Heart left ventricle (tissue), 16 donors: ENCODE measurements at regions of chr2 and their contacts with region 1.

Region 1: GRCh38 chr2:196592912-196593881 is 46.3 kb upstream of the CCDC150 start:
- DNase-seq: peak; percentile 32 to 76 (median 56)
- ATAC-seq: peak; percentile 78 to 82 (median 80)
- H3K4me3 ChIP-seq: peak within 1 kb of the TSS; percentile 50 to 83 (median 70)
- H3K27ac ChIP-seq: peak within 1 kb of the TSS; percentile 62 to 93 (median 80)
- H3K4me1 ChIP-seq: peaks cover 0 to 14% (median 0%) of the 10 kb centered on the region in 12 donors
- H3K27me3 ChIP-seq: peaks cover 0 to 66% (median 0%) of the 10 kb centered on the region in 9 donors
- CTCF ChIP-seq: peak in 6 of 12 donors; percentile 9 to 36 (median 20)
- POLR2A ChIP-seq: no peak

Region 2: DNA sequence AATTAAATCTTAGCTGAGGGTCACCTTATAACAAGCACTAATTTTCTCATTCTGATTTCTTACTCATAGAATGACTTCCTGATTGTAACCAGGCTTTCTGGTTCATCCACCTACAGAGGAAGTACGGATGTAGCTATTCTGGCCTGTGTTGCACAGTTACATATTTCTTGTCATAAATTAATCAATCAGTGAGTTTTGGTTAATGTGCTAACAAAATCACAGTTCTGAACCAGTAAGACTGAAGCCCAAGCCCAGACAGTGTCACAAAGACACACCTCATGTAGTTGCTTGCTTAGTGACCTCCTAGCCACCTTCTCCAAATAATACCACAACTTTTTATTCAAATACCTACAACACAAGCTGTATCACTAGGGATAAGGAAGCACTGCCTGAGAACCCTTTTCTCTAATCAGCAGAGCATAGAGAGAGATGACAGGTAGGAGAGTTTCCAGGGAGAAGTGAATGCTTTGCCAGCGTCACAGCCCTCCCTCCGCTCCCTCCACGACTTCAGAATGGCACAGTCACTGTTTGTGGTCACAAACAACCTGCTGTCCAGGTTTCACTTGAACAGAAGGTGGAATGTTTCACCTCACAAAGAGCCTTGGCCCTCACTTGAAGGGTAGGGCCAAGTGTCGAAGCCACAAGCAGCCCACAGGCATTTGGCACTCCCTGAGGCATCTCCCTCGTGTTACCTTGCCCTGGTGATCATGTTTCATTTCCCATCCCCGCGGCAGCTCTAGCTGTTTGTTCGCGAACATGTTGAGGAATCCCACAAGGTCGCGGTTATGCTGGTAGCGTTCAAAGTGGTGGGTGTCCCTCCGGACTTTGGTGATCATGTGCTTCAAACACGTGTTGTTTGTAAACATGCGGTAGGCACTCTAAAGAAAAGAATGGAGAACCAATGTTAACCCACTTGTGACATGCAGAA is 301.1 kb before region 1 on chr2:
- intact Hi-C with region 1: loop called in 4 of 10 experiments (anchors 5 to 10 kb)
- DNase-seq: peak in 1 of 5 donors; percentile 53
- ATAC-seq: peak in 3 of 4 donors; percentile 45 to 76 (median 50)
- H3K4me3 ChIP-seq: no peak overlapping the region
- H3K27ac ChIP-seq: peak overlapping the region in 7 of 12 donors; percentile 31 to 79 (median 59)
- H3K4me1 ChIP-seq: peaks cover 0 to 58% (median 18%) of the 10 kb centered on the region in 12 donors
- H3K27me3 ChIP-seq: no peaks in the 10 kb centered on the region
- CTCF ChIP-seq: no peak
- POLR2A ChIP-seq: no peak

Region 3: DNA sequence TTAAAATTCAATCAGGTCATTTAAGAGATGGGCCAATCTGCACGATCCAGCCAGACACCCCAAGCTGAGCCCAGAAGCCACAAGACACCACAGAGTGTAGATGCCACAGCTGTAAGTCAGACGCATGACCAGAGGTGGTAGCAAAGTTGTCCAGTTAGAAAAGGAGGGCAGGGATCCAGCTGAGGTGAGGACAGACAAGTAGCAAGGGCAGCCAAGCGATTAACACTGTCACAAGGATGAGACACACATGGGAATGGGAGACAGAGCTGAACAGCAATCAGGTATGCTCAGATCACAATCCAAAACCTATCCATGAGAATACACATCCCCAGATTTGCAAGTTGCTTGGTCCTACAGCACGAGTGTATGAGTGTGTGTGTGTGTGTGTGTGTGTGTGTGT is 278.4 kb before region 1 on chr2:
- intact Hi-C with region 1: loop called in 3 of 10 experiments (anchors 5 to 10 kb)
- DNase-seq: peak in 4 of 5 donors; percentile 49 to 72 (median 60)
- ATAC-seq: peak; percentile 62 to 84 (median 78)
- H3K4me3 ChIP-seq: no peak overlapping the region
- H3K27ac ChIP-seq: peak overlapping the region in 2 of 12 donors; percentile 4 to 20
- H3K4me1 ChIP-seq: peaks cover 0 to 34% (median 4%) of the 10 kb centered on the region in 12 donors
- H3K27me3 ChIP-seq: no peaks in the 10 kb centered on the region
- CTCF ChIP-seq: peak in 1 of 12 donors; percentile 23
- POLR2A ChIP-seq: no peak

Region 4: DNA sequence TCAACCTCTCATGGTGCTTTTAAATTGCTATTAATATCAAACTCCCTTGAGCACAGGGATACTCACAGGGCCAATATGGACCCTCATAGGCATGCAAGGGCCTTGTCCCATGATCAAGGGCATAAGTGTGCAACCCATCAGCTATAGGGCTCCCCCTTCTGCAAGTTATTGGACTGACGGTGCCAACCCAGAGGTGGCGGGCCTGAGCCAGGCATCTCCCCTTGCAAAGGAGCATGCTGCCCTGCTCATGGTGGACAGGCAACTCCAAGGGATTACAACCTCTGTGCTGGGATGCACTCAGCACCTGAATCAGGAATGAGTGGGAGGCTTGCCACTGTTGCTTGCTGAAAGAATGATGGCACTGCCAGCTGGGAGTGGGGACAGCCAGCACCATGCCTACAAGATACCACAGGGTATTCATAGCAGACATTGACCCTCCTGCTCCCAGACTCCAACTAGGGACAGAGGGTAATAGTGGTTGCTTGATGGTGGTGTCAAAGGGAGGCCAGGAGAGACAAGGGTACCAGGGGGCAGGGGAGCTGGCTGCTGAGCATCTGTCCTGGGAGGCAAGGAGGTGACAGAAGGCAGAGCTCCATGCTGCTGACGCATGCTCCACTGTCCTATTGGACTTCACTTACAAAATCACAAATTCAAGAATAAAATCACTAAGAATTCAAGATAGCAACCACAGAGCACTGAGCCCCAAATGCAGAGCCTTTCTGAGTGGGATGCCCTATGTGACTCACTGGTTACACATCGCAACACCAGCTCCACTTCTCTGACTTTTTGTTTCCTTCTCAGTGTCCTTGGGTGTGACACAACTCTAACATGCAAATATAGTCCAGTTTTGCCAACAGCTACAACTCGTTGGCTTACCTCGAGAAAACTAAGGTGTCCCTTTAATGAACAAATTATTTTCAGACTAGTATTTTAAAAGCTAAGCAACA is 110.8 kb before region 1 on chr2:
- intact Hi-C with region 1: loop called in 5 of 10 experiments (anchors 5 to 10 kb)
- DNase-seq: peak in 2 of 5 donors; percentile 29 to 50
- ATAC-seq: peak in 3 of 4 donors; percentile 29 to 33 (median 32)
- H3K4me3 ChIP-seq: no peak overlapping the region
- H3K27ac ChIP-seq: no peak overlapping the region
- H3K4me1 ChIP-seq: peaks cover 0 to 49% (median 3%) of the 10 kb centered on the region in 12 donors
- H3K27me3 ChIP-seq: no peaks in the 10 kb centered on the region
- CTCF ChIP-seq: no peak
- POLR2A ChIP-seq: no peak

Region 5: GRCh38 chr2:196750982-196751635 is 157.9 kb after region 1 on chr2:
- intact Hi-C with region 1: loop called in 1 of 10 experiments (anchors 10 kb)
- DNase-seq: peak in 4 of 5 donors; percentile 33 to 41 (median 37)
- ATAC-seq: peak in 3 of 4 donors; percentile 56 to 80 (median 71)
- H3K4me3 ChIP-seq: no peak overlapping the region
- H3K27ac ChIP-seq: no peak overlapping the region
- H3K4me1 ChIP-seq: peaks cover 0 to 3% (median 0%) of the 10 kb centered on the region in 12 donors
- H3K27me3 ChIP-seq: no peaks in the 10 kb centered on the region
- CTCF ChIP-seq: peak; percentile 59 to 89 (median 72)
- POLR2A ChIP-seq: no peak